ENCODE measurements at regions of chr1 and their contacts with region 1.

Region 1: GRCh38 chr1:156728597-156729462 is at the start of gene ISG20L2:
- DNase-seq: peak; percentile 96
- H3K4me3 Mint-ChIP-seq: no peak within 1 kb of the TSS
- H3K27ac Mint-ChIP-seq: no peak within 1 kb of the TSS
- H3K4me1 Mint-ChIP-seq: peaks cover 30% of the 10 kb centered on the region
- H3K27me3 Mint-ChIP-seq: no peaks in the 10 kb centered on the region
- total RNA-seq, gene ISG20L2: 73.7 and 81.5 TPM in 2 replicates

Region 2: GRCh38 chr1:156338180-156338973 is 390.5 kb before region 1 on chr1 and contains the starts of genes CCT3 and TSACC:
- intact Hi-C with region 1: loop called (anchors 1 kb)
- DNase-seq: peak; percentile 99
- H3K4me3 Mint-ChIP-seq: peak within 1 kb of the TSS; percentile 98
- H3K27ac Mint-ChIP-seq: peak within 1 kb of the TSS; percentile 95
- H3K4me1 Mint-ChIP-seq: peaks cover 41% of the 10 kb centered on the region
- H3K27me3 Mint-ChIP-seq: peaks cover 5% of the 10 kb centered on the region
- total RNA-seq, gene CCT3: 567 and 570 TPM in 2 replicates
- total RNA-seq, gene TSACC: 0.81 TPM in 1 of 2 replicates, not detected in the other

Region 3: GRCh38 chr1:156591432-156592157 is 137.2 kb before region 1 on chr1 and contains the start of gene NAXE:
- intact Hi-C with region 1: loop called (anchors 5 kb)
- DNase-seq: peak; percentile 68
- H3K4me3 Mint-ChIP-seq: peak within 1 kb of the TSS; percentile 83
- H3K27ac Mint-ChIP-seq: peak within 1 kb of the TSS; percentile 85
- H3K4me1 Mint-ChIP-seq: peaks cover 19% of the 10 kb centered on the region
- H3K27me3 Mint-ChIP-seq: no peaks in the 10 kb centered on the region
- total RNA-seq, gene NAXE: 77.8 and 78.0 TPM in 2 replicates

Region 4: DNA sequence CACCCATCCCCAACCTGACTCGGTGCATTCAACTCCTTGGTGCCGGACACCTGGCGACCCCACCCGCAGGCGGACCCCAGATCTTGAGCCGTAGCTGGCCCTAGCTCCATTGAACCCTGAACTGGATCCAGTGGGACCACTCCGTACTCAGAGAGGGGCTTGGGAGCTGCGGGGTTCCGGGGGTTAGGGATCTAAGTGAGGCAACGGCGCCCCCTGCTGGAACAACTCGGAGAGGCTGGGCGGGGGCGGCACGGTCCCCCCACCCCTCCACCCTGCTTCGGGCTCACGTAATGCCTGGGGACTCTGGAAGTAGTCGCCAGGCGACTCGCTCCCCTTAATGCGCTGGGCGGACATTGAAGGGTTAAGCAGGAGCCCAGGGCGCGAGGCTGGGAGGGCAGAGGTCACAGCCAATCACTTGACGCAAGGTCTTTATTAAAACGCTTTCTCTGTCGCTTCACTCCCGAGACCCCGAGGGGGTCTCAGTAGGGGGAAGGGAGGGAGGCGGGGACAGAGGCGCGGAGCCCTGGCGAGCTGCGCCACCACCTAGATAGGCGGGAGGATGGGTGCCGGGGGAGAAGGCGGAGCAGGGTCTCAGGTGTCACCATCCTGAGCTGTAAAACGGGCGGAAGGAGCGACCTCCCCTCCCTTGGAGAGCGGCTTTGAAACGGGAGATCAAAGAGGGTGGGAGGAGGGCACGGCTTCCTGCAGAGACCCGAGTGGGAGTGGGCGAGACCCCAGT is 22.7 kb before region 1 on chr1:
- intact Hi-C with region 1: loop called (anchors 2 kb)
- DNase-seq: peak; percentile 47
- H3K4me3 Mint-ChIP-seq: peak overlapping the region; percentile 85
- H3K27ac Mint-ChIP-seq: peak overlapping the region; percentile 29
- H3K4me1 Mint-ChIP-seq: peaks cover 24% of the 10 kb centered on the region
- H3K27me3 Mint-ChIP-seq: peaks cover 43% of the 10 kb centered on the region

Region 5: DNA sequence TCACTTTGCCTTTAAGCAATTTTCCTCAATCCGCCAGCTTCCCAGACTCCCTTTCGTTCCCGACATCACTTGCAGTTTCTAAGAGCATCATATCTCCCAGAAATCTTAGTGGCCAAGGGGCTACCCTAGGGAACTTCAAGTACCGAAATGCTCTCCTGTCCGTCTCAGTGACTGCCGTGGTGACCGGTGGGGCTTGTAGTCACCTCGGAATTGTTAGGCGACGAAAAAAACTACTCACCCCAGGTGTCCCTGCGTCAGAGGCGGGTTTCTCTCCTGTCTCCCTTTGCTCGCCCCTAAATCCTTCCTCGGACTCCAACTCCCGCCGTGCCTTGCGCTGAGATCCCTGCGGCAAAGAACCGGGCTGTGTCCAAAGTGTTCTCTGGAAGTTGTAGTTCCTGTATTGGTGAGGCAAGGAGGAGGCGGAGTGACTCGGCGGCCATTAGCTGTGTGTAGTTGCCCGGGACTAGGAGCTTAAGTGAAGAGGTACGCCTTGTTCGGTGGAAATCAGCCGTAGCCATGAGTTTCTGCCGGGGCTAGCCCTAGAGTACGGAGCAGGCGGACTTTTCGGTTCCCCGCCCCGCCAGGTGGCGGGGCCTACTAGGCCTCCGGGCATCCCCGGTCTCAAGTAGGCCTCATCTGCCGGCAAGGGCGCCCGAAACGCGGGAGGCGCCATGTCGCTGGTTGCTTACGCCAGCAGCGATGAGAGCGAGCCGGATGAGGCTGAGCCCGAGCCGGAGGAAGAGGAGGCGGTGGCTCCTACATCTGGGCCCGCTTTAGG is 38.5 kb after region 1 on chr1 and contains the start of gene PRCC:
- intact Hi-C with region 1: loop called (anchors 1 kb)
- DNase-seq: peak; percentile 97
- H3K4me3 Mint-ChIP-seq: no peak within 1 kb of the TSS
- H3K27ac Mint-ChIP-seq: no peak within 1 kb of the TSS
- H3K4me1 Mint-ChIP-seq: peaks cover 46% of the 10 kb centered on the region
- H3K27me3 Mint-ChIP-seq: no peaks in the 10 kb centered on the region
- total RNA-seq, gene PRCC: 117 TPM in 2 replicates

Region 6: DNA sequence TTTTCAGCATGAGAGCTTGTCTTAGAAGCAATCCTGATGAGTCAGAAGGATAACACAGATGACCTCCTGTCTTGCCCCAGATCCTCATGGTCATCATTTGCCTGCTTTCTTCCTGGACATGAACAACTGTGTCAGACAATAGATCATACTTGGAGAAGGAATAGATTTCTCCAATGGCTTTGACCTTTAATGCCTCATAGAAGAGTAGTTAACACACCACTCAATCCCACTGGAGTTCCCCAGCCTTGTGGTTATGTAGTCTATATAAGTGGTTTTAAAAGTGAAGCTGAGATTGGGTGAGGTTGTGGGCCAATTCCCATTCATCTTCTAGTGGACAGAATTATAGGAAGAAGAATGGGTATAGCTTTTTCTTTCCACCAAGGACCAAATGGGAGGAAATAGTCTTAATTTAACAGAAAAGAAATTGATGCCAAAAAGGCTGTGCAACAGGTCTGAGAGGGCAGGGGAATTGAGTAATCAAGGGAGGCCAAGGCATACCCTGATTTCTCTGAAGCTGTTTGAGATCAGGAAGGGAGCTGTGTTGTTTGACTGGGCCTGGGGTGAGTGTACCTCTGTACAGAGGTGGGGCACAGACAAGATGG is 52.9 kb after region 1 on chr1:
- intact Hi-C with region 1: no loop called
- DNase-seq: no peak
- H3K4me3 Mint-ChIP-seq: no peak overlapping the region
- H3K27ac Mint-ChIP-seq: no peak overlapping the region
- H3K4me1 Mint-ChIP-seq: peaks cover 33% of the 10 kb centered on the region
- H3K27me3 Mint-ChIP-seq: no peaks in the 10 kb centered on the region

Region 7: GRCh38 chr1:156892190-156893047 is 163.6 kb after region 1 on chr1:
- intact Hi-C with region 1: loop called (anchors 1 kb)
- DNase-seq: peak; percentile 80
- H3K4me3 Mint-ChIP-seq: peak overlapping the region; percentile 61
- H3K27ac Mint-ChIP-seq: no peak overlapping the region
- H3K4me1 Mint-ChIP-seq: peaks cover 8% of the 10 kb centered on the region
- H3K27me3 Mint-ChIP-seq: peaks cover 58% of the 10 kb centered on the region